ENCODE measurements at regions of chr12 and their contacts with region 1.

Region 1: GRCh38 chr12:109844983-109845823 is 12.0 kb upstream of the TRPV4 start:
- DNase-seq: peak; percentile 79 to 99 (median 91)
- ATAC-seq: peak; percentile 98 to 99 (median 98)
- H3K4me3 ChIP-seq: peak overlapping the region in 1 of 4 donors; percentile 26
- H3K27ac ChIP-seq: no peak overlapping the region
- H3K4me1 ChIP-seq: no peaks in the 10 kb centered on the region
- H3K27me3 ChIP-seq: no peaks in the 10 kb centered on the region
- CTCF ChIP-seq: peak; percentile 97 to 100 (median 99)

Region 2: GRCh38 chr12:109713187-109713984 is 131.8 kb before region 1 on chr12 and contains the start of gene FAM222A:
- intact Hi-C with region 1: no loop called
- DNase-seq: peak; percentile 96 to 98 (median 98)
- ATAC-seq: peak; percentile 88 to 94 (median 89)
- H3K4me3 ChIP-seq: peak within 1 kb of the TSS; percentile 51 to 69 (median 61)
- H3K27ac ChIP-seq: peak within 1 kb of the TSS in 3 of 4 donors; percentile 28 to 48 (median 44)
- H3K4me1 ChIP-seq: peaks cover 0 to 15% (median 12%) of the 10 kb centered on the region in 3 donors
- H3K27me3 ChIP-seq: no peaks in the 10 kb centered on the region
- CTCF ChIP-seq: no peak
- total RNA-seq, gene FAM222A: 2.1 to 4.3 (median 3.3) TPM

Region 3: GRCh38 chr12:109804820-109805761 is 40.1 kb before region 1 on chr12:
- intact Hi-C with region 1: loop called in 2 of 3 experiments (anchors 5 kb)
- DNase-seq: peak in 5 of 6 donors; percentile 38 to 88 (median 62)
- ATAC-seq: peak; percentile 80 to 95 (median 90)
- H3K4me3 ChIP-seq: no peak overlapping the region
- H3K27ac ChIP-seq: no peak overlapping the region
- H3K4me1 ChIP-seq: no peaks in the 10 kb centered on the region
- H3K27me3 ChIP-seq: no peaks in the 10 kb centered on the region
- CTCF ChIP-seq: peak; percentile 88 to 97 (median 94)

Region 4: DNA sequence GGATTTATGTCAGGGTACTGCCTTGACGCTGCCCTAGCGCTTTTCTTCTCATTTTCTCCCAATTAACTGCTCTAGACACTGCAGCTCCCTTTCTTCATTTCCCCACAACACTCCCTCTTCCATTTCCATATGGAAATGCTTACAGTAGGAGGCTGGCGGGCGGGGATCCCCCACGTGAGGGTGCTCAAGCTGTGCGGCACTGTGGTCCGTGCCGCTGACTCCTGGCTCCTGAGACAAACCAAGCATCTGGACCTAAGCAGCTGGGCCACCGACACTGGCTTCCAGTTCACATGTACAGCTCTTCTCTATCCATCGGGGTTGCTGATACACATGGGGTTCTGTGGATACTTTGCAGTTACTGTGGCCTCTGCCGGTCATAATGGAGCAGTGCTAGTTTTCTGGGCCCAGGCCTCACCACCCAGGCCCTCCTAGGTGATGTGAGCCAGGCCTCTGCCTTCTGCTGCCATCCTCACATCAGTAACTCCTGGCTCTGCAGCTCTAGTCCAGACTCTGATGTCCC is 75.1 kb after region 1 on chr12:
- intact Hi-C with region 1: no loop called
- DNase-seq: peak in 1 of 6 donors; percentile 35
- ATAC-seq: no peak
- H3K4me3 ChIP-seq: no peak overlapping the region
- H3K27ac ChIP-seq: no peak overlapping the region
- H3K4me1 ChIP-seq: peaks cover 0 to 6% (median under 1%) of the 10 kb centered on the region in 3 donors
- H3K27me3 ChIP-seq: no peaks in the 10 kb centered on the region
- CTCF ChIP-seq: no peak

Measured in pancreas (tissue), 10 donors.